Left cardiac atrium (tissue), 4 donors: ENCODE measurements at regions of chr6 and their contacts with region 1.

Region 1: DNA sequence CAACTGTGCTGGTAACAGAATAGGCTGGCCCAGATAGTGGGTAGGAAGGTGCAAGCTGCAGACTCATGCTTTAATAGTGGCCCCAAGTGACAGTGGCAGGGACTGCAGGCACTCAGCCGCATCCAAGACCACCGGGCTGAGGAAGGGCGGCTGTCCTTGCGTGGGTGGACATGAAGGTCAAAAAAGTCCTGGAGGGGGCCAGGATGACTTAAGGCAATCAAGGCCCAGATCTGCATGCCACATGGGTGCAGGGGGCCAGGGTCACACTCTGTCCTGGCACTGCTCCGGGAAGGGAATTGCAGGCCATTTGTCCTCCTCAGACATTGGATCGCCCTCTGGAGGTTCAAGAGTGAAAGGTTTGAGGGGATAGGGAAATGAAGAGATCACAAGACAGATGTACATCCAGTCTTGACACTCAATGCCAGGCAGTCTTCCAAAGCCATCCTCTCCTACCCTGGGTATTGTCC is 10.4 kb upstream of the VNN2 start:
- DNase-seq: no peak
- ATAC-seq: peak; percentile 78 to 80

Region 2: GRCh38 chr6:132530293-132530974 is 237.7 kb before region 1 on chr6:
- intact Hi-C with region 1: loop called (anchors 10 kb)
- DNase-seq: peak; percentile 48
- ATAC-seq: peak; percentile 64 to 72

Region 3: DNA sequence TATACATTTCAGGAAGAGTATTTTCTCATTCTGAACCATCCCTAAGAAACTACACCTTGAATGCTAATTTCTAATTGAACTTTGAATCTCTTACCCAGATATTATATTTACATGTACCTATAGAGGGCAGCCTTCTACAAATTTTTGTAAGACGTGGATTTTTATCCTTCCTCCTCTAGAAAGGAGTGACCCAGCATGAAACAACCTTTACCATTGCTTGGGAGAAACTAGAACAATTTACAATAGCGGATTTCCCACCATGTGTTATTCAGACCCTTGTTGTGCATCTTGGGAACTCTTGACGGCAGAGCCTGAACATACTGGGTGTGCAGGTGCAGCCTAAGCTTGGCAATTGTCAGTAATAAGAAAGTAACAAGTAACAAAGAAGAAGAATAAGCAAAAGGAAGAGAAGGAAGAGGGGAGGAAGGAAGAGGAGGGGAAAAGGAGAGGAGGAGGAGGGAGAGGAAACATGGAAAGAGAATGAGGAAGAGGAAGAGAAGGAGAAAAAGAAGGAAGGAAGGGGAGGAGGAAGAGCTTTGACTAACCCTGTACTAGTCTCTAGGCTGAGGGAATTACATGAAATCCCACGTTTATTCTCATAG is 98.3 kb before region 1 on chr6:
- intact Hi-C with region 1: loop called (anchors 5 to 10 kb)
- DNase-seq: no peak
- ATAC-seq: peak; percentile 73 to 85